Panc1 (cell line): ENCODE measurements at regions of chr3 and their contacts with region 1.

Region 1: DNA sequence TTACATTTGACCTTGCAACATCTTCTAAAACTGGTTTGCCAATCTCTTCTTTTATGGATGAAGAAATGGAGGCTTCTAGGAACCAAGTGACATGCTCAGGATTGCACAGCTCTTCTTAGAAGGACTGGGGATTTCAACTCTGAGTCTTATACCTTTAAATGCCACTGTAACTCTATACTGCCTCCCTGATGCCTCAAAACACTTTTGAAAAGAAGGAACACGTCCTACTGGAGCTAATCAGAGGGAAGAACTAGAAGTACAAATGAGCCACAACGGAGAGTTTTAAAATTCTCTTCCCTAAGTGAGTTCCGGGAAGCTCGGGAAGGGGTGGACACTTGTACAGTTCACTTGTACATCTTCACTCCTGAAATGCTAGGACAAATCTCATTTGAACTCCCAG is 949 bp upstream of the MITF start:
- DNase-seq: no peak
- ATAC-seq: no peak
- H3K4me3 ChIP-seq: peak overlapping the region; percentile 68 to 82
- H3K27ac ChIP-seq: no peak overlapping the region
- H3K4me1 ChIP-seq: peaks cover 4% of the 10 kb centered on the region; the same call in 1 of the 2 replicates
- H3K27me3 ChIP-seq: no peaks in the 10 kb centered on the region
- CTCF ChIP-seq: no peak

Region 2: GRCh38 chr3:69659180-69659910 is 79.0 kb before region 1 on chr3:
- CTCF ChIA-PET with region 1: no interaction called
- POLR2A ChIA-PET with region 1: no interaction called
- in situ Hi-C with region 1: no loop called
- intact Hi-C with region 1: no loop called
- DNase-seq: no peak
- ATAC-seq: no peak
- H3K4me3 ChIP-seq: no peak overlapping the region
- H3K27ac ChIP-seq: no peak overlapping the region
- H3K4me1 ChIP-seq: no peaks in the 10 kb centered on the region
- H3K27me3 ChIP-seq: no peaks in the 10 kb centered on the region
- CTCF ChIP-seq: no peak

Region 3: DNA sequence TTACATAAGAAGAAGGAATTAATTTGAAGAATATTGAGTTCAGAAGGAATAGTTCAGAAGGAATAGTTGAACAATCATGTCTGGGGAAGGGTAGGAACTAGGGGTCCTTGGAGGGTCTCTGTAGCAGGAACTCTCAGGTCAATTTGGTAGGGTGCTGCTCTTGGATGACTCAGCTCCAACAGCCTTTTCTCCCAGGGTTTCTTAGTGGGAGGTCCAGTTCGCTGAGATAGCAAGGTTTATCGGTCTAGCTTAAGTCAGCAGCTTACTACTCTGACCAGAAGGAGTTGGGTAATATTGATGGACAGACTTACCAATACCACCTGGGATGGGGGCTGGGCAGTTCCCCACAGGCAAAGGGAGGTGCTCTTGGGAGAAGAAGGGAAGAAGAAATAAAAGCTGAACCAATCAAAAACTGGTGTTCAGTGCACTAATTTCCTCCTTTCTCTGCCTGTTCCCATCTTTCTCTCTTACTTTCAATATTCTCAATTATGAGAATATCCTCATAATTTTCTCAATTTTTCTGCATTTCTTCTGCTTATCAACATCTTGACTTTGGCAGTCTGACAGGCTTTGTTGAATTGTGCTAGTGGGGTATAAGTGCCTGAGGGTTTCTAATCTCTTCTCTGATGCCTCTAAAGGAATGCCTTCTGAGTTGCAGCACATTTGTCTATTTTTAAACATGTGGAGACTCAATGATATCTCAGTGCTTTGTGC is 13.4 kb before region 1 on chr3:
- CTCF ChIA-PET with region 1: no interaction called
- POLR2A ChIA-PET with region 1: no interaction called
- in situ Hi-C with region 1: no loop called
- intact Hi-C with region 1: no loop called
- DNase-seq: no peak
- ATAC-seq: no peak
- H3K4me3 ChIP-seq: no peak overlapping the region
- H3K27ac ChIP-seq: no peak overlapping the region
- H3K4me1 ChIP-seq: no peaks in the 10 kb centered on the region
- H3K27me3 ChIP-seq: no peaks in the 10 kb centered on the region
- CTCF ChIP-seq: no peak

Region 4: DNA sequence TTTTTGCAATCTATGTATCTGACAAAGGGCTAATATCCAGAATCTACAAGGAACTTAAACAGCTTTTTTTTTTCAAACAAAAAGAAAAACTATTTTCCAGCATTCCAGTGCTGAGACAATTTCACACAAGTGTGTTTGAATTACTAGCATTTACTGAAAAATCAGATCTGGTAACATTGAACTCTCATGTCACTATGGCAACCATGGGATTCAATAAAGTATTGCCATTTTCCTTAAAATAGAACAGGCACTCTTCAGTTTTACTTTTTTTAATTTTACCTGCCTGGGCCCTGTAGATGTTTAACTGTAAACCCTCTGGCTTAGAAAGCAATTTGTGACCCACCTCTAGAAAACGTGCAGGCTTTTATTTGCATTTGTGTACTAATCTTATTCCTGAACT is 106.4 kb after region 1 on chr3:
- CTCF ChIA-PET with region 1: interaction called, 14 read pairs
- POLR2A ChIA-PET with region 1: no interaction called
- in situ Hi-C with region 1: no loop called
- intact Hi-C with region 1: no loop called
- DNase-seq: no peak
- ATAC-seq: no peak
- H3K4me3 ChIP-seq: no peak overlapping the region
- H3K27ac ChIP-seq: no peak overlapping the region
- H3K4me1 ChIP-seq: no peaks in the 10 kb centered on the region
- H3K27me3 ChIP-seq: no peaks in the 10 kb centered on the region
- CTCF ChIP-seq: no peak